CD8-positive, alpha-beta T cell (primary cell): ENCODE measurements at regions of chr19 and their contacts with region 1.

Region 1: DNA sequence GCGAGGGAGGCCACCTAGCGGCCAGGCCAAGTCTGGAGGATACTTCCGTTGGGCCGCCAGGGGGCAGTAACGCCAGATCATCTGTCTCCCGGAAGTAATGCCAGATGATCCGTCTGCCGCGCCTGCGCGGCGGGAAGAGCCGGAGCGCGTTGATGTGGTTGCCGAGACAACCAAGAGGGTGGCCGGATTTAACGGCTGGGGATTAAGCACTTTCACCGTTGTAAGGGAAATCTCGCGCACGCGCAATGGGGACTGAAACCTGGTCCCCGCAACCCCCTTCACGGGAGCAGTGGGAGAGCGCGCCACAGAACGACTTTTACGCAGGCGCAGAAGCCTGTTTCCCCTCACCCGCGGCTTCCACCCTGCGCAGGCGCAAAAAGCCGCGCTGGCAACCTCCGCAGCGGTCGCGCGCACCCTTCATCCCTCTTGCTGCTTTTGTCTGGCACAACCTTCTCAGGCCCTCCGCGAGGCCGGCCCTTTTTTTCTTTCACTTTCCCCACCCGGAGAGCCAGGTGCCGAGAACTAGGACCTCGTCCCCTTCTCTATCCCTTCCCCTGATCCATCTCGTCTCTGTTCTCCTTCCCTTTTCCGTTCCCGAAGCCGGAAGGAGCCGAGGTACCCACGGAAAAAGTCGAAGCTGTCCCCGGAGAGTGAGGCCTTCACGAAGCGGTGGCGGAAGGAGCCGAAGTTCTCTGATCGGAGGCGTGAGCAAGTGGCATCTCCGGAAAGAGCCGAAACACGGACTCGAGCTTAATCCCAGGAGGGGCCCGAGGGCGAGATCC is 886 bp upstream of the U2AF2 start:
- DNase-seq: peak; percentile 98 to 100 (median 99)
- ATAC-seq: peak; percentile 77
- H3K4me3 ChIP-seq: peak overlapping the region; percentile 72 to 89
- H3K4me3 Mint-ChIP-seq: peak overlapping the region; percentile 95
- H3K27ac ChIP-seq: peak overlapping the region; percentile 79 to 100
- H3K27ac Mint-ChIP-seq: peak overlapping the region; percentile 97
- H3K4me1 ChIP-seq: peaks cover 38% of the 10 kb centered on the region
- H3K4me1 Mint-ChIP-seq: peaks cover 44% of the 10 kb centered on the region
- H3K27me3 ChIP-seq: peaks cover 0 to 5% of the 10 kb centered on the region in 2 experiments
- H3K27me3 Mint-ChIP-seq: no peaks in the 10 kb centered on the region
- CTCF ChIP-seq: peak; percentile 100

Region 2: GRCh38 chr19:54203151-54203611 is 1450.8 kb before region 1 on chr19:
- CTCF ChIA-PET with region 1: no interaction called
- POLR2A ChIA-PET with region 1: no interaction called
- intact Hi-C with region 1: loop called in 1 of 2 experiments (anchors 5 kb)
- DNase-seq: no peak
- ATAC-seq: no peak
- H3K4me3 ChIP-seq: no peak overlapping the region
- H3K4me3 Mint-ChIP-seq: peak overlapping the region; percentile 100
- H3K27ac ChIP-seq: no peak overlapping the region
- H3K27ac Mint-ChIP-seq: peak overlapping the region; percentile 70
- H3K4me1 ChIP-seq: peaks cover 68% of the 10 kb centered on the region
- H3K4me1 Mint-ChIP-seq: peaks cover 77% of the 10 kb centered on the region
- H3K27me3 ChIP-seq: no peaks in the 10 kb centered on the region
- H3K27me3 Mint-ChIP-seq: no peaks in the 10 kb centered on the region
- CTCF ChIP-seq: no peak

Region 3: DNA sequence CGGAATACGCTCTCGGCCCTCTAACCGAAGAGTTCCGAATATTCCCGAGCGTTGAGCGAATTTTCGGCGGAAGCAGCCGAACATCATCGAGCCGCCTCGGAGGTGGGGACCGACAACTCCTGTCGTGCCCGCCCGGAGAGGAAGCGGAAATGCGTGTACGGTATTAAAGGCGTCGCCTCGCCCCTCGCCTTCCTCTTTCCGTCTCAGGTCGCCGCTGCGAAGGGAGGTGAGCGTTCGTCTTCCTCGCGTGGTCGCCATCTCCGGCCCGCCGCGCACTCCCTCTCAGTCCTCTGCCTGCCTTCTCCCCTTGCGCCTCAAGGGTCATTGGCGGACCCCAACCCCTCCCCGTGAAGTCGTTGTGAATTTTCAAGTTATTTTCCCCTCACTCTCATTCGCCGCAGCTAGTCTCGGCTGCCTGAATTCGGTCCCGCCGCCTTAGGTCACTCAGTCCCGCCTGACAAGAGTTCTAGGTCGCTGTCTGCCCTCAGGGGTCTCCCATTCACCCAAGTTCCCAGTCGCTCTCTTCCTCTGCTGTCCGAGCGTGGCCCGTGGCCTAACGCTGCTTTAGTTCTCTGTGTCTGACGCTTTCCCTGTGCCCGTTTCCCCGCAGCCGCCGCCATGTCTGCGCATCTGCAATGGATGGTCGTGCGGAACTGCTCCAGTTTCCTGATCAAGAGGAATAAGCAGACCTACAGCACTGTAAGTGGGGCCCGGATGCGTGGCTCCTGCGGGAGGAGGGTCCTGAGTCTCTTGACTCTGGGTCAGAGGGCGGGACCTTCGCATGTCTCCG is 268.0 kb before region 1 on chr19 and contains the start of gene RPL28:
- CTCF ChIA-PET with region 1: no interaction called
- POLR2A ChIA-PET with region 1: interaction called, 6 read pairs
- intact Hi-C with region 1: loop called in 1 of 2 experiments (anchors 1 kb)
- DNase-seq: peak; percentile 97 to 99 (median 99)
- ATAC-seq: peak; percentile 80
- H3K4me3 ChIP-seq: peak within 1 kb of the TSS; percentile 75 to 94
- H3K4me3 Mint-ChIP-seq: peak within 1 kb of the TSS; percentile 100
- H3K27ac ChIP-seq: peak within 1 kb of the TSS; percentile 95 to 97
- H3K27ac Mint-ChIP-seq: peak within 1 kb of the TSS; percentile 100
- H3K4me1 ChIP-seq: peaks cover 59% of the 10 kb centered on the region
- H3K4me1 Mint-ChIP-seq: peaks cover 75% of the 10 kb centered on the region
- H3K27me3 ChIP-seq: no peaks in the 10 kb centered on the region
- H3K27me3 Mint-ChIP-seq: no peaks in the 10 kb centered on the region
- CTCF ChIP-seq: no peak
- total RNA-seq, gene RPL28: 4,227 to 4,270 TPM

Region 4: GRCh38 chr19:55549500-55550320 is 104.2 kb before region 1 on chr19:
- CTCF ChIA-PET with region 1: no interaction called
- POLR2A ChIA-PET with region 1: no interaction called
- intact Hi-C with region 1: no loop called
- DNase-seq: no peak
- ATAC-seq: no peak
- H3K4me3 ChIP-seq: no peak overlapping the region
- H3K4me3 Mint-ChIP-seq: no peak overlapping the region
- H3K27ac ChIP-seq: no peak overlapping the region
- H3K27ac Mint-ChIP-seq: no peak overlapping the region
- H3K4me1 ChIP-seq: no peaks in the 10 kb centered on the region
- H3K4me1 Mint-ChIP-seq: no peaks in the 10 kb centered on the region
- H3K27me3 ChIP-seq: peaks cover 0 to 8% of the 10 kb centered on the region in 2 experiments
- H3K27me3 Mint-ChIP-seq: peaks cover 25% of the 10 kb centered on the region
- CTCF ChIP-seq: no peak

Region 5: DNA sequence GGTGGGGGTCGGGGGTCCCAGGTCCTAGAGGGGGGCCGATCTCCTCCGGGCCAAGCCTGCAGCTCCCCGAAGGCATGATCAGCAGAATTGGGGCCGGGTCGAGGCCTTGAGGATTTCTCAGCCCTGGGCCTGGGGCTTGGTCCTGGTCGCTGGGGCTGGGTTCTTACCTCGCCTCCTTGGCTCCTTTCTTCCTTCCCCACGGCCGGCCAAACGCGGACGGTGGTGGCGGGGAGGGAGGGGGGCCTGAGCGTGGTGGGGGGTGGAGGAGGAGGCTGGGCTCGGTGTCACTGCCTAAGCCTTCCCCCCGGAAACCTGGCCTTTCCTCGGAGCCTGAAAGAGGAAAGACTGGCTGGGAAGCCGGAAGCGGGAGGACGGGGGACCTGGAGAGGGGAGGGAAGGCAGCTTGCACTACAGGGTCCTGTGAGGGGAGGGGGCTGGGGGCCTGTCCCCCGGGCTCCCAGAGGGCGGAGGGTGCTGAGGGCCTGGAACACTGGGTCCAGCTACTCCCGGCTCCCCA is 73.3 kb before region 1 on chr19 and contains the start of gene ZNF579:
- CTCF ChIA-PET with region 1: no interaction called
- POLR2A ChIA-PET with region 1: no interaction called
- intact Hi-C with region 1: no loop called
- DNase-seq: peak; percentile 39 to 86 (median 75)
- ATAC-seq: peak; percentile 71
- H3K4me3 ChIP-seq: peak within 1 kb of the TSS; percentile 70 to 90
- H3K4me3 Mint-ChIP-seq: peak within 1 kb of the TSS; percentile 91
- H3K27ac ChIP-seq: peak within 1 kb of the TSS; percentile 67 to 81
- H3K27ac Mint-ChIP-seq: peak within 1 kb of the TSS; percentile 93
- H3K4me1 ChIP-seq: peaks cover 20% of the 10 kb centered on the region
- H3K4me1 Mint-ChIP-seq: peaks cover 27% of the 10 kb centered on the region
- H3K27me3 ChIP-seq: no peaks in the 10 kb centered on the region
- H3K27me3 Mint-ChIP-seq: no peaks in the 10 kb centered on the region
- CTCF ChIP-seq: no peak
- total RNA-seq, gene ZNF579: 5.7 to 6.1 TPM

Region 6: GRCh38 chr19:55605207-55605636 is 48.7 kb before region 1 on chr19:
- CTCF ChIA-PET with region 1: no interaction called
- POLR2A ChIA-PET with region 1: interaction called, 12 read pairs
- intact Hi-C with region 1: loop called in 1 of 2 experiments (anchors 1 kb)
- DNase-seq: peak; percentile 90 to 99 (median 98)
- ATAC-seq: peak; percentile 78
- H3K4me3 ChIP-seq: peak overlapping the region; percentile 60 to 80
- H3K4me3 Mint-ChIP-seq: peak overlapping the region; percentile 86
- H3K27ac ChIP-seq: peak overlapping the region; percentile 60 to 91
- H3K27ac Mint-ChIP-seq: peak overlapping the region; percentile 90
- H3K4me1 ChIP-seq: peaks cover 24% of the 10 kb centered on the region
- H3K4me1 Mint-ChIP-seq: peaks cover 60% of the 10 kb centered on the region
- H3K27me3 ChIP-seq: no peaks in the 10 kb centered on the region
- H3K27me3 Mint-ChIP-seq: no peaks in the 10 kb centered on the region
- CTCF ChIP-seq: no peak

Region 7: GRCh38 chr19:55674841-55675660 is 21.1 kb after region 1 on chr19 and contains the start of gene EPN1:
- CTCF ChIA-PET with region 1: interaction called, 12 read pairs
- POLR2A ChIA-PET with region 1: interaction called, 4 read pairs
- intact Hi-C with region 1: loop called (anchors 1 kb)
- DNase-seq: peak; percentile 96 to 99 (median 97)
- ATAC-seq: peak; percentile 91
- H3K4me3 ChIP-seq: peak within 1 kb of the TSS; percentile 80
- H3K4me3 Mint-ChIP-seq: peak within 1 kb of the TSS; percentile 93
- H3K27ac ChIP-seq: peak within 1 kb of the TSS; percentile 88 to 91
- H3K27ac Mint-ChIP-seq: peak within 1 kb of the TSS; percentile 97
- H3K4me1 ChIP-seq: peaks cover 51% of the 10 kb centered on the region
- H3K4me1 Mint-ChIP-seq: peaks cover 61% of the 10 kb centered on the region
- H3K27me3 ChIP-seq: no peaks in the 10 kb centered on the region
- H3K27me3 Mint-ChIP-seq: no peaks in the 10 kb centered on the region
- CTCF ChIP-seq: no peak
- total RNA-seq, gene EPN1: 41.1 to 45.2 TPM

Region 8: GRCh38 chr19:57419439-57419838 is 1765.5 kb after region 1 on chr19:
- CTCF ChIA-PET with region 1: no interaction called
- POLR2A ChIA-PET with region 1: no interaction called
- intact Hi-C with region 1: no loop called
- DNase-seq: no peak
- ATAC-seq: no peak
- H3K4me3 ChIP-seq: no peak overlapping the region
- H3K4me3 Mint-ChIP-seq: no peak overlapping the region
- H3K27ac ChIP-seq: no peak overlapping the region
- H3K27ac Mint-ChIP-seq: no peak overlapping the region
- H3K4me1 ChIP-seq: no peaks in the 10 kb centered on the region
- H3K4me1 Mint-ChIP-seq: peaks cover 11% of the 10 kb centered on the region
- H3K27me3 ChIP-seq: no peaks in the 10 kb centered on the region
- H3K27me3 Mint-ChIP-seq: no peaks in the 10 kb centered on the region
- CTCF ChIP-seq: no peak